ENCODE measurements at regions of chr12 and their contacts with region 1.

Region 1: GRCh38 chr12:39619660-39620433 is at the start of gene ABCD2:
- DNase-seq: peak; percentile 46
- ATAC-seq: peak; percentile 86
- H3K4me3 Mint-ChIP-seq: no peak within 1 kb of the TSS
- H3K27ac Mint-ChIP-seq: no peak within 1 kb of the TSS
- H3K4me1 Mint-ChIP-seq: peaks cover 23% of the 10 kb centered on the region
- H3K27me3 Mint-ChIP-seq: no peaks in the 10 kb centered on the region
- CTCF ChIP-seq: no peak
- total RNA-seq, gene ABCD2: 1.4 and 1.8 TPM in 2 replicates

Region 2: DNA sequence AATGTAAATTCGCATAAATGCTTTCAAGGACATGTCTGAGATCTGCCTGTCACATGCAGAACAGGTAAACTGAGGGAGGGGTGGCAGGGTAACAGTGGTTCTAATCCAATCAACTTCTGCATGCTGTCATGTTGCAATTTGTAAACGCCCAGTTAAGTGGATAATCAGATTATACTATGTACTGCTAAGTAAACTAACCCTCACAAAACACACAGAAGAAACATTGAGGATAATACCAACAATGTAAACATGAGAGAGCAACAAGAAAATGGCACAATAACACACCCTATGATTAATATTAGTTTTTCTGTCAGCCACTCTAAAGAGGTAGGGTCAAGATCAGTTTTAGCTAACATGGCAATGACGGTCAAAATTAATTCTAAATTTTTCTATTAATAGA is 300.7 kb before region 1 on chr12:
- CTCF ChIA-PET with region 1: no interaction called
- POLR2A ChIA-PET with region 1: no interaction called
- intact Hi-C with region 1: loop called (anchors 5 kb)
- DNase-seq: no peak
- ATAC-seq: no peak
- H3K4me3 Mint-ChIP-seq: no peak overlapping the region
- H3K27ac Mint-ChIP-seq: no peak overlapping the region
- H3K4me1 Mint-ChIP-seq: no peaks in the 10 kb centered on the region
- H3K27me3 Mint-ChIP-seq: no peaks in the 10 kb centered on the region
- CTCF ChIP-seq: no peak

Region 3: GRCh38 chr12:39587225-39587624 is 32.6 kb before region 1 on chr12:
- CTCF ChIA-PET with region 1: interaction called, 3 read pairs
- POLR2A ChIA-PET with region 1: no interaction called
- intact Hi-C with region 1: loop called (anchors 1 kb)
- DNase-seq: no peak
- ATAC-seq: peak; percentile 62
- H3K4me3 Mint-ChIP-seq: no peak overlapping the region
- H3K27ac Mint-ChIP-seq: no peak overlapping the region
- H3K4me1 Mint-ChIP-seq: peaks cover 2% of the 10 kb centered on the region
- H3K27me3 Mint-ChIP-seq: no peaks in the 10 kb centered on the region
- CTCF ChIP-seq: no peak

Region 4: GRCh38 chr12:39638178-39638577 is 18.3 kb after region 1 on chr12:
- CTCF ChIA-PET with region 1: no interaction called
- POLR2A ChIA-PET with region 1: interaction called, 4 read pairs
- intact Hi-C with region 1: loop called (anchors 2 kb)
- DNase-seq: no peak
- ATAC-seq: no peak
- H3K4me3 Mint-ChIP-seq: no peak overlapping the region
- H3K27ac Mint-ChIP-seq: no peak overlapping the region
- H3K4me1 Mint-ChIP-seq: no peaks in the 10 kb centered on the region
- H3K27me3 Mint-ChIP-seq: peaks cover 8% of the 10 kb centered on the region
- CTCF ChIP-seq: no peak

Region 5: DNA sequence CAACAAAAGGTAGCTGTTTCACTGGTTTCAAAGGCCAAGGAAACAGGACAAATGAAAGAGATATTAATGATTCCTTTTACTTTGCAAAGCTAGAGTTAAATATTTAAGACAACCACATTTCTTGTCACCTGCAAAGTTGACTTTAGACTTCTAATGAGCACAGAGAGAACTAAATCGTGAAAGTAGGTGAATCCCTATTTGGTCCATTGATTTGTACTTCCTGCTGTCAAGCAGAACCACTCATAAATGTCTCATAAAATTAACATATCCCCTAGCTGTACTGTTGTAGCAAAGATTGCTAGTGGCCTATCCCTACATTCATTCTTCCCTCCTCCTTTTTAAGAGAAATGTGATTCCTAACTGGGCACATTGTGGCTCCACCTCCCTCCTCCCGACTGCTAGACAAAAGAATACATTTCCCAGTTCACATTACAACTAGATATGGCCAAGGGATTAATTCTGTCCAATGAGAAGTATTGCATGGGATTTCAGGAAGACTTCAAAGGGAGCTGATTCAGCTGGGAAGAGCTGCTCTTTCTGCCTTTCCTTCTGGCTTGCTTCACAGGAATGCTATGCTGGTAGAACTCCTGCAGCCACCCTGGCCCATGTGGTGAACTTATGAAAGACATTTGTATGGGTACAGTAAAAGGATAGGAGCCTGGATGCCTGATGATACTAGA is 227.3 kb after region 1 on chr12:
- CTCF ChIA-PET with region 1: no interaction called
- POLR2A ChIA-PET with region 1: no interaction called
- intact Hi-C with region 1: no loop called
- DNase-seq: no peak
- ATAC-seq: peak; percentile 65
- H3K4me3 Mint-ChIP-seq: no peak overlapping the region
- H3K27ac Mint-ChIP-seq: no peak overlapping the region
- H3K4me1 Mint-ChIP-seq: peaks cover 31% of the 10 kb centered on the region
- H3K27me3 Mint-ChIP-seq: no peaks in the 10 kb centered on the region
- CTCF ChIP-seq: no peak

Region 6: DNA sequence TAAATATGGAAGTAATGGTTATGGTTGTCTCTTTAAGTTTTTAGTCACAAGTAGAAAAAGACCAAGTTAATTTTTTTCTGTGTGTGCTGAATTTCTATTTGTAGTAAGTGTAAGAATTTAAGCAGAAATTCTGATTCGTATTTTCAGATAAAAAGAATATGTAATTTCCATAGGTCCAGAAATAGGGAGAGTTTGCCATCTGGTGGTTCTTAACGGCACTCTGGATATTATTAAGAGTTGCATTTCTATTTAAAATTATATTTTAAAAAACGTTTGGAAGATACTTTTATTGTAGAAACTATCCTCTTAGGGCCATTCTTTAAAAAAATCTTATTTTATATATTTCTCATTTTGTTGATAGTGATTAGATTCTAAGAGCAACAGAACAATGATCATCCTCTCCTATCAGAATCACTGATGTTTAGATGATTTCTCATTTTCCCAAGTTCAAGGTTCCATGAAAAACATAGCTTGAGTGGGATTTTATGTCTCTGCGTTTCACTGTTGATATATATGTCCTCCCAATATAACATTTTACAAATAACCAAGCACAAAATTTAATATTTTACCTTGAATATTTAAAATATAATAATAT is 693.2 kb after region 1 on chr12:
- CTCF ChIA-PET with region 1: no interaction called
- POLR2A ChIA-PET with region 1: no interaction called
- intact Hi-C with region 1: loop called (anchors 5 kb)
- DNase-seq: no peak
- ATAC-seq: no peak
- H3K4me3 Mint-ChIP-seq: no peak overlapping the region
- H3K27ac Mint-ChIP-seq: peak overlapping the region; percentile 69
- H3K4me1 Mint-ChIP-seq: peaks cover 35% of the 10 kb centered on the region
- H3K27me3 Mint-ChIP-seq: no peaks in the 10 kb centered on the region
- CTCF ChIP-seq: peak; percentile 60

Measured in activated B cell treated with CpG ODN at 0.5 μM for 24 hours (primary cell).